ENCODE measurements at regions of chr12 and their contacts with region 1.

Region 1: GRCh38 chr12:93419388-93420034 is 22.2 kb downstream of the UBE2N start:
- DNase-seq: peak; percentile 51
- H3K4me3 ChIP-seq: no peak overlapping the region
- CTCF ChIP-seq: no peak

Region 2: DNA sequence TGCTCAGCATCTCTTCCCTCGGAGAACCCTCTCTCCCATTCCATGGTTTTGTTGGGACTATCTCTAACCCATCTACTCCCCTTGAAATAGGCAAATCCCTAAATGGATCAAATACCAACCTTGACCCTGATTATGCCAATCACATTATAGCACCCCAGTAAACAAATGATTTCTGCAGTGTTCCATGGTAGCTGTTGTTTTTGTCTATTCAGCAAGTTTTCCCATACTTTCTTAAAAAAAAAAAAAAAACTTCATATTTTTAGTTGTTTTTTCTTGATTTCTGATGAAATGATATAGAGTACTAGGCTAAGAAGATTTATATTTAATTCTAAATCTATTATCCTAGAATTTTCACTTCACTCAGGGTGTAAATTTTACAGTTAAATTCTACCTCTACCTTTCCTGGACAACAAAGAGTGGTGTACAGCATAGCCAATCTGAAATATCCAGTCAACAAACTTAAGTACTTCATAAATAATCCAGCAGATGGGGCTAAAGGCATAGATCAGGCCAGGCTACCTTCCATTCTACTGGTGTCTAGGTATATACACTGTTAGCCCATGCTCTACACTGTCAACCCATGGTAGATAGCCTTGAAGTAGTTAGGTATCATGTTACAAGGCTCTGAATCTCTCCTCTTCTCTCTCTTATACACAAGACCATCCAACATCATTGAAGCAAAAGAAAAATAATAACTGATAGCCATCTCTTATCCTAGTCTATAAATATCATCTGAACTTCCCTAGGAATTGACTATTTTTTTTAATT is 634.5 kb before region 1 on chr12:
- in situ Hi-C with region 1: loop called (anchors 25 kb)
- DNase-seq: peak; percentile 77
- H3K4me3 ChIP-seq: no peak overlapping the region
- CTCF ChIP-seq: peak; percentile 49